PC-9 (cell line): ENCODE measurements at regions of chr6 and their contacts with region 1.

Region 1: DNA sequence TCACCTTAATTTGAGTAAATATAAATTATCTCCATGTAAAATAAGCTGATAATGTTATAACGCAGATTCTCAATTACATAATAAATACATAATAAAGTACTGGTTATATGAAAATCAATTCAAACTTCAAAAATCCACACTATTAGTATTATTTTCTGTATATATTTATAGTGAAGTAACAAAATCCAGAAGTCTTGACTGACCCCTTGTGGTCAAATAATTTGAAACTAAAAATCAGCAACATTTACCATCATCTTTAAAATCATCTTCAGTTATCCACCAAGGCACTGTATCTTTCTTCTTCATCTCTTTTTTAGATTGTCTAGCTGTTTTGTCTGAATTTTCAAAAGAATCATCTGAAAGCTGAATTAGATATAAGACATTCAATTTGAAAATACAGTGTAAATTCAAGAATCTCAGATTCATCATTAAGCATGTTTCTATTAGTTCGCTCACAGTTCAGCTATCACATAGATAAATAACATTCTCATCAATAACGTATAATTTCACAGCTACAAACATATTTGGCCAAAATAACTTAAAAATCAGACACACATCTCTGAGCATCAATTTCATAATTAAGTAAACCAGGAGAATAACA is 6.5 kb downstream of the CEP162 start:
- DNase-seq: no peak
- H3K4me3 ChIP-seq: no peak overlapping the region
- H3K27ac ChIP-seq: no peak overlapping the region
- H3K4me1 ChIP-seq: no peaks in the 10 kb centered on the region
- H3K27me3 ChIP-seq: no peaks in the 10 kb centered on the region
- CTCF ChIP-seq: peak; percentile 76

Region 2: GRCh38 chr6:83615025-83615999 is 605.6 kb before region 1 on chr6:
- CTCF ChIA-PET with region 1: interaction called, 3 read pairs
- POLR2A ChIA-PET with region 1: no interaction called
- intact Hi-C with region 1: loop called (anchors 5 kb)
- DNase-seq: no peak
- H3K4me3 ChIP-seq: no peak overlapping the region
- H3K27ac ChIP-seq: no peak overlapping the region
- H3K4me1 ChIP-seq: no peaks in the 10 kb centered on the region
- H3K27me3 ChIP-seq: no peaks in the 10 kb centered on the region
- CTCF ChIP-seq: peak; percentile 75

Region 3: DNA sequence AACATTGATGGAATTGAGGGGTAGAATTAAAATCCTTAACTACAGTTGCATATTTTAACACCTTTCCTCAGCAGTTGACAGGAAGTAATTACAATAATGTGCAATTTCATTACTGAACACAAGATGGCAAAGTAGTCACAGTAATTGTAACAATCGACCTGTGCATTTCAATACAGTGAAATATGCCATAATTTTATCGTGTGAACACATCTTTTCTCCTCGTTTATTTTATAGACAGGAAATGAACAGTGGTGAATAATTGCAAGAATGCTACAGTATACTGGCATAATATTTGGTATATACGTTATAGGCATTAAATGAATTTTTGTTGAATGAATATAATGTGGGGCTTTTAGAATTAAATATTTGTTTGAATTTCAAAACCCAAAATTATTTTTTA is 336.4 kb before region 1 on chr6:
- CTCF ChIA-PET with region 1: no interaction called
- POLR2A ChIA-PET with region 1: no interaction called
- intact Hi-C with region 1: loop called (anchors 1 kb)
- DNase-seq: peak in 1 of 2 experiments; percentile 59
- H3K4me3 ChIP-seq: no peak overlapping the region
- H3K27ac ChIP-seq: no peak overlapping the region
- H3K4me1 ChIP-seq: no peaks in the 10 kb centered on the region
- H3K27me3 ChIP-seq: no peaks in the 10 kb centered on the region
- CTCF ChIP-seq: peak; percentile 71

Region 4: DNA sequence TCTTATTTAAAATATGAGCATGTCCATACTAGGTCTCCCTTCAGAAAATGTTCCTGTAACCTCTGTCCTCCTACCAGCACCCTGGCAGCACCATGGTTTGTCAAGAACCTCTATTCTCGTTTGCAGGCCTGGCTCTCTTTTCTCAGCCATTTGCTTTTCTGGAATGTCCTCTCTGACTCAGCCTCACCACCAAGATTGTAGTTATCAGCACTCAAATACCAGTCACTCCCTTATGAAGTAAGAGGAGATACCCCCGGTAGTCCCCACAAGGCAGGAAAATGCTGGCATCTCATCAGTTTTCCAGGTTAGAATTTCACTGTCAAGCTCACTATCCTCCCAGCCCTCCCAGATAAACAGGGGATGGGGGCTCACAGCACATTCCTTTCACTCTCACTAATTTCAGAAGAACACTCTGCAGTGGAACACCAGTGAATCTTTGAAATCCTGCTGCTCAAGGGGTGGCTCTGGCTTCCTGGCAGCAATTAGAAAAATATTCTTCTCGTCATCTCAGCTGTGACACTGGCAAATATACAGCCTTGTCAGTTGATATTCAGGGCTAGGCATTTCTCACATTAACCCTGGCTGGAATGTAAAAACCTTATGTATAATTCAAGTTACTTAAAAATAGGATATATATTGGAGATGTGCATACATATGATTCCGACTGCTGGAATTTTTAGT is 414.3 kb after region 1 on chr6:
- CTCF ChIA-PET with region 1: no interaction called
- POLR2A ChIA-PET with region 1: no interaction called
- intact Hi-C with region 1: no loop called
- DNase-seq: peak; percentile 37 to 65
- H3K4me3 ChIP-seq: no peak overlapping the region
- H3K27ac ChIP-seq: peak overlapping the region; percentile 43; the same call in 1 of the 2 replicates
- H3K4me1 ChIP-seq: peaks cover 16% of the 10 kb centered on the region; the same call in 1 of the 2 replicates
- H3K27me3 ChIP-seq: no peaks in the 10 kb centered on the region
- CTCF ChIP-seq: no peak